Calu3 (cell line): ENCODE measurements at regions of chrX and their contacts with region 1.

Region 1: DNA sequence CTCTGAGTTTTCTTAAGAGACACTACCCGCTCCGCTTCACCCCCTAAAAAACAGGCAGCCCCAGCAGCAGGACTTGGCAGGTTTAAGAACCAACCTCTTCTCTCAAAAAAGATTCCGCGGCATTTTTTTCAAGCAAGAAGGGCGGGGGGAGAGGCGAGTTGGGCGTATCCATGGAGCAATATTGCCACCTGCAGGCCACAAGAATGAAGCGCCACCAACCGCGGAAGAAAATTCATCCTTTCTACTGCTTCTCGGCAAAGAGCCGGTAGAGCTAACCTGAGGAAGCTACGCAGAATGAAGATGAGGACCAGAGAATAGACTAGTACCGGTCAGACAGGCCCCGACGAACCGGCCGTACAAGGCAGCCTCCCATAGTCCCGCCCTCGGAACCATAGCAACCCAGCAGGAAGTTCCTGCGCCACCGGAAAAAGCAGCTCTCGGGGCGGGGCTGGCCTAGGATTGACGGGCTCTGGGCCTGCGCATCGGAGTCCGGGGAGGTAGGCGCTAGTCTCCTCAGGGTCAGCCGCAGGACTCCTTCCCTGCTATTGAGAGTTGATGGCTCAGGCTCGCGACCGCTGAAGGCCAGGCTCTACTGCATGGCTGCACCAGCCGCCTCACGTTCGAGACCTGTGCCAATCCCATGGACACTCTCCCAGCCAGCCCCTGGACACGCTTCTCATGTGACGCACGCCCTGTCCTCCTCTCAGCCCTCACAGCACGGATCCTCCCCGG is 76.9 kb downstream of the MAGED4 start:
- DNase-seq: peak; percentile 89
- H3K4me3 Mint-ChIP-seq: peak overlapping the region; percentile 78
- H3K27ac Mint-ChIP-seq: peak overlapping the region; percentile 98
- H3K4me1 Mint-ChIP-seq: peaks cover 9% of the 10 kb centered on the region
- H3K27me3 Mint-ChIP-seq: peaks cover 17% of the 10 kb centered on the region
- CTCF ChIP-seq: peak; percentile 97

Region 2: GRCh38 chrX:51614353-51615012 is 647.1 kb before region 1 on chrX:
- CTCF ChIA-PET with region 1: no interaction called
- intact Hi-C with region 1: loop called (anchors 1 kb)
- DNase-seq: no peak
- H3K4me3 Mint-ChIP-seq: no peak overlapping the region
- H3K27ac Mint-ChIP-seq: no peak overlapping the region
- H3K4me1 Mint-ChIP-seq: no peaks in the 10 kb centered on the region
- H3K27me3 Mint-ChIP-seq: peaks cover 59% of the 10 kb centered on the region
- CTCF ChIP-seq: peak; percentile 37

Region 3: GRCh38 chrX:52166840-52167239 is 94.8 kb before region 1 on chrX:
- CTCF ChIA-PET with region 1: no interaction called
- intact Hi-C with region 1: no loop called
- DNase-seq: no peak
- H3K4me3 Mint-ChIP-seq: no peak overlapping the region
- H3K27ac Mint-ChIP-seq: no peak overlapping the region
- H3K4me1 Mint-ChIP-seq: no peaks in the 10 kb centered on the region
- H3K27me3 Mint-ChIP-seq: peaks cover 25% of the 10 kb centered on the region
- CTCF ChIP-seq: no peak